ENCODE measurements at regions of chr1 and their contacts with region 1.

Region 1: DNA sequence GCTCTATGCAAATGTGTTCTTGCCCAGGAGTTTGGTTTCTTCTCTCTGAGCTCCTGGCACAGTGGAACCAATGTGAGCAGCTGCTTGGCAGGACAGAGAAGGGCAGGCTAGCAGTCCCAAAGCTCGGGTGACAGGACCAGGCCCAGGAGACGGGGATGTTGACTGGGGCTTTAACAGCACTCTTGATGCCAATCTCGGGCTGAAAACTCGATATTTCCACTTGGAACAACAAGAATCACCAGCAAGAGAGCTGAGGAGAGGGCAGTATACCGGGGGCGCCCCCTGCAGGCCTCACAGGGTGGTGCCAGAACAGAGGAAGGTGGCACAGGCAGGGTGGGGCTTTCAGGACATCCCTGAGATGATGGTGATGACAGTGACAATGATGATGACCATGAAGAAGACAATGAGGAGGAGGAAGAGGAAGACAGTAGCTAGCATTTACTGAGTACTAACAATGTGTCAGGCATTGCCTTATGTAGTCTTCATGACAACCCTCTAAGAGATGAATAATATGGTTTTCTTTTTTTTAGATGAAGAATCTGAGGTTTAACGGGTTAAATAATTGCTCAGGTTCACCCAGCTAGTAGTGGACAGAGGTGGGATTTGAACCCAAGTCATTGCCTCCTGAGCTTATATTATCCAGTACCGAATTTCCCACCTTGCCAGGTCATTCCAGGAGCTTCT is 2.7 kb upstream of the KCNJ9 start:
- DNase-seq: peak; percentile 23
- ATAC-seq: peak; percentile 95
- H3K4me3 ChIP-seq: no peak overlapping the region
- H3K27ac ChIP-seq: no peak overlapping the region
- H3K4me1 ChIP-seq: no peaks in the 10 kb centered on the region; a peak in 1 of 4 replicates
- H3K27me3 ChIP-seq: peaks cover 26% of the 10 kb centered on the region
- CTCF ChIP-seq: peak; percentile 82 to 98 (median 97)
- POLR2A ChIP-seq: no peak
- RAD21 ChIP-seq: peak; percentile 74

Region 2: DNA sequence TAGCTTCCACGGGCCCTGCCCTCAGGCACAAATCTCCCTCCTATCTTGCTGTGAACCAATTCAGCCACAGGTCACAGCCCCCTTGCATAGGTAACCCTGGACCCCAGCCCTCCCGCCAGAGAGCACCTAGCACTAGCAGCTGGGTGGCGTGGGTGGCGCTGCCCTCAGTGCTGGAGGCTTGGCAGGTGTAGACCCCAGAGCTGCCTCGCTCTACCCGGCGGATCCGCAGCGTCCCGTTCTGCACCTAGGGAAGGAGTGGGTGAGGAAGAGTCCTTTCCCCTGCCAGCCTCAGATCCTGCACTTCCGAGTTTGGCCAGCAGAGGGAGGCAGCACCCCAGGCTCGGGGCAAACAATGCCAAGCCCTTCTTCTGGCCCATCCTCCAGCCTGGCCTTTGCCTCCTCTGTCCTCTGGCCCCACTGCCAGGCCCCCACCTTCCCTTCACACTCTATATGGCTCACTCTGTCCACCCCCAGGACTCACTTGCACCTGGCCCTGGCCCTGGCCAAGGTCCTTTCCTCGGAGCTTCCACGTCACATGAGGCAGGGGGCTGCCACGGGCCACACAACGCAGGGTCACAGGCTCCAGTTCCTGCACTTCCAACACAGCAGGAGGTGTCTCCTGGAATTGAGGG is 142.3 kb before region 1 on chr1:
- CTCF ChIA-PET with region 1: interaction called, 5 read pairs
- POLR2A ChIA-PET with region 1: no interaction called
- RAD21 ChIA-PET with region 1: no interaction called
- intact Hi-C with region 1: loop called (anchors 2 kb)
- DNase-seq: no peak
- ATAC-seq: peak; percentile 95
- H3K4me3 ChIP-seq: no peak overlapping the region
- H3K27ac ChIP-seq: no peak overlapping the region
- H3K4me1 ChIP-seq: peaks cover 3 to 15% of the 10 kb centered on the region in 2 experiments
- H3K27me3 ChIP-seq: no peaks in the 10 kb centered on the region
- CTCF ChIP-seq: peak; percentile 84 to 96 (median 95)
- POLR2A ChIP-seq: no peak
- RAD21 ChIP-seq: peak; percentile 98

Region 3: DNA sequence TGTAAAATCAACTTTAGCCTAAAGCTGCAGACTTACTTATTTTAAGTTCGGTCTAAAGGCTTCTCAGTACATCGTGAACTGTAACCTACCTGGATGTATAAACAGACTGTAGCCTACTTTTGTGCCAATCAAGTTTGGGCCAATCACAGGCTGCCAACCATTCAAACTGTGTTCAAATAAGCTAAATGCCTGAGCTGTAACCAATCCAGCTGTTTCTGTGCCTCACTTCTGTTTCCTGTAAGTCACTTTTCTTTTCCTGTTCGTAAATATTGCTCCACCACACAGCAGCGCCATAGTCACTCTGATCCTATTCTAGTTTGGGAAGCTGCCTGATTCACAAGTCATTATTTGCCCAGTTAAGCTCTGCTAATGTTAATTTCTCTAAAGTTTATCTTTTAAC is 87.1 kb before region 1 on chr1:
- CTCF ChIA-PET with region 1: no interaction called
- POLR2A ChIA-PET with region 1: no interaction called
- RAD21 ChIA-PET with region 1: no interaction called
- intact Hi-C with region 1: no loop called
- DNase-seq: no peak
- ATAC-seq: no peak
- H3K4me3 ChIP-seq: no peak overlapping the region
- H3K27ac ChIP-seq: no peak overlapping the region
- H3K4me1 ChIP-seq: peaks cover 0 to 9% of the 10 kb centered on the region in 2 experiments; a peak in 2 of 4 replicates
- H3K27me3 ChIP-seq: no peaks in the 10 kb centered on the region
- CTCF ChIP-seq: no peak
- POLR2A ChIP-seq: no peak
- RAD21 ChIP-seq: no peak

Region 4: DNA sequence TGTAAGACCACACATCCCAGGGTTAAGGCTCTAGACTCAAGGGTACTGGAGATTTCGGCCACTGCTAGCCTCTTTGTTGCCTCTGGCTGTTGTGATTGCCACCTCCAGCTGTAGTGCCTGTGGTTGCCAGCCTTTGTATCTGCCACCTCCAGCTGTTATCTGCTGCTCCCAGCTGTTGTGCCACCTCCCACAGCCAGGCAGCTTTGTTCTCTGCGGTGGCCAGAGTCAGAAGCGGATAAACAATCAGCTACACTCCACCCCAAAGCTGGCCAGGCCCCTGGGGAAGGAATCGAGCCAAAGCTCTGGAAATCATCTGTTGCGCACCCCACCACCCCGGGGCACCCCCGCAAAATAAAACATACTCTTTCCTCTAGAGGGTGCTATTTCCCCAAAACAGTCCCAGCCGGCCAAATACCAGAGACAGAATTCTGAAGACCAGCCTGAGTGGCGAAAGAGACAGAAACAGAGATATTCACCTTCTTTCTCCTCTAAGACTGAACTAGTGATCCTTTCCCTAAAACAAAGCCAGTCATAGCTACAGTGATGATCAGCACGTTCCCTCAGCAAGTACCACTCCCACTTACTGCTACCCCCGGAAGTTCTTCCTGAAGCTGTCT is 32.1 kb before region 1 on chr1:
- CTCF ChIA-PET with region 1: interaction called, 33 read pairs
- POLR2A ChIA-PET with region 1: no interaction called
- RAD21 ChIA-PET with region 1: interaction called, 3 read pairs
- intact Hi-C with region 1: loop called (anchors 1 kb)
- DNase-seq: no peak
- ATAC-seq: peak; percentile 90
- H3K4me3 ChIP-seq: no peak overlapping the region
- H3K27ac ChIP-seq: no peak overlapping the region
- H3K4me1 ChIP-seq: peaks cover 4 to 6% of the 10 kb centered on the region in 2 experiments; a peak in 3 of 4 replicates
- H3K27me3 ChIP-seq: peaks cover 13% of the 10 kb centered on the region
- CTCF ChIP-seq: peak; percentile 66 to 88 (median 81)
- POLR2A ChIP-seq: no peak
- RAD21 ChIP-seq: peak; percentile 76

Region 5: DNA sequence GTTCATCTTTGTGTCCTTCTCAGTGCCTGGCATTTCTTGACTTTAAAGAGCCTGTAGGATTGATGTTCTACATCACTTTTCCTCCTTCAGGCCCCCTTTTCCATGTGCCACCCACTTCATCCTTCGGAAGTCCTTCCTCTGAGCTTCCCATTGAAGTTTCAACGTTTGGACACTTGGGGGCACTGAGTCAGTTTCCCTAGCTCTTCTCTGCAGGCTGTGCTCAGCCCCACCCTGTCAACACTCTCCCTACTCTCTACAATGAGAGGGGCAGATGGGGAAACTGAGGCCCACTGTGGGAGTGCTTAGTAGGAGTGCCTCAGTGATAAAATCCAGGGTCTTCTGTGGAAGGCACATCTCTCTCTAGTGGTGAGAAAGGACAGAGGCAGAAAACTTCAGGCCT is 20.6 kb before region 1 on chr1:
- CTCF ChIA-PET with region 1: interaction called, 33 read pairs
- POLR2A ChIA-PET with region 1: no interaction called
- RAD21 ChIA-PET with region 1: interaction called, 4 to 7 read pairs
- intact Hi-C with region 1: no loop called
- DNase-seq: no peak
- ATAC-seq: peak; percentile 87
- H3K4me3 ChIP-seq: no peak overlapping the region
- H3K27ac ChIP-seq: no peak overlapping the region
- H3K4me1 ChIP-seq: peaks cover 0 to 3% of the 10 kb centered on the region in 2 experiments; a peak in 1 of 4 replicates
- H3K27me3 ChIP-seq: peaks cover 8% of the 10 kb centered on the region
- CTCF ChIP-seq: peak; percentile 37 to 51 (median 46); a peak in 5 of 6 replicates
- POLR2A ChIP-seq: no peak
- RAD21 ChIP-seq: peak; percentile 32; the same call in 1 of the 2 replicates

Region 6: GRCh38 chr1:160219062-160219929 is 140.6 kb after region 1 on chr1:
- CTCF ChIA-PET with region 1: no interaction called
- POLR2A ChIA-PET with region 1: no interaction called
- RAD21 ChIA-PET with region 1: no interaction called
- intact Hi-C with region 1: no loop called
- DNase-seq: peak; percentile 19
- ATAC-seq: peak; percentile 78
- H3K4me3 ChIP-seq: no peak overlapping the region
- H3K27ac ChIP-seq: no peak overlapping the region
- H3K4me1 ChIP-seq: no peaks in the 10 kb centered on the region
- H3K27me3 ChIP-seq: no peaks in the 10 kb centered on the region
- CTCF ChIP-seq: peak; percentile 36 to 41 (median 40); a peak in 4 of 6 replicates
- POLR2A ChIP-seq: no peak
- RAD21 ChIP-seq: peak; percentile 60